WTC11 (cell line): ENCODE measurements at regions of chr6 and their contacts with region 1.

Region 1: DNA sequence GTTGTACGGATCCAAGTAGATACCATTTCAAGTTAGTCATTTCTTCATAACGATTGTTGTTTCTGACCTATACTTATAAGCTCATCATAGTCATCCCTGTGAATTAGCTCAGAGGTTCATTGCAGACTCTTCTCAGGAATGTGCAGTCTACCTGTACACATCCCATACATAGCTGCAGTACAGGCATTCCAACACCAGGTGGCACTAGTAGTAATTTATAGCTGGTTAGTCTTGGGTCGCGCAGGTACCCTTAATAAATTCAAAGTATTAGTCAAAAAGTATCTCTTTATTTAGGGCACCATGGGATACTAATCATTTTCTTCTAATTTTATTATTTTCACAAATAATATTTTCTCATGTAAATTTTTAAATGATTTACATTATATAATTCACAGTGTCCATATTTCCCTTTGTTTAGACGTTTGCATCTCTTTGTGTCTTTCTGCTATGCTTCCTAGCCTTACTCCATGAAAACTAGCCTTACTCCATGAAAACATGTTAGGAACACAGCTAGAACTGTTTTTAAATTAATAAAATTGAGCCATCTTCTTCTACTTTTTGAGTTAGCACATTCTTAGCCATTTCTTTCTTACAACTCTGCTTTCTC is 128.6 kb upstream of the FAM83B start:
- DNase-seq: peak; percentile 79
- ATAC-seq: peak; percentile 81
- H3K4me3 Mint-ChIP-seq: no peak overlapping the region
- H3K27ac Mint-ChIP-seq: no peak overlapping the region
- H3K4me1 Mint-ChIP-seq: peaks cover 9% of the 10 kb centered on the region
- H3K27me3 Mint-ChIP-seq: no peaks in the 10 kb centered on the region
- CTCF ChIP-seq: peak; percentile 88

Region 2: DNA sequence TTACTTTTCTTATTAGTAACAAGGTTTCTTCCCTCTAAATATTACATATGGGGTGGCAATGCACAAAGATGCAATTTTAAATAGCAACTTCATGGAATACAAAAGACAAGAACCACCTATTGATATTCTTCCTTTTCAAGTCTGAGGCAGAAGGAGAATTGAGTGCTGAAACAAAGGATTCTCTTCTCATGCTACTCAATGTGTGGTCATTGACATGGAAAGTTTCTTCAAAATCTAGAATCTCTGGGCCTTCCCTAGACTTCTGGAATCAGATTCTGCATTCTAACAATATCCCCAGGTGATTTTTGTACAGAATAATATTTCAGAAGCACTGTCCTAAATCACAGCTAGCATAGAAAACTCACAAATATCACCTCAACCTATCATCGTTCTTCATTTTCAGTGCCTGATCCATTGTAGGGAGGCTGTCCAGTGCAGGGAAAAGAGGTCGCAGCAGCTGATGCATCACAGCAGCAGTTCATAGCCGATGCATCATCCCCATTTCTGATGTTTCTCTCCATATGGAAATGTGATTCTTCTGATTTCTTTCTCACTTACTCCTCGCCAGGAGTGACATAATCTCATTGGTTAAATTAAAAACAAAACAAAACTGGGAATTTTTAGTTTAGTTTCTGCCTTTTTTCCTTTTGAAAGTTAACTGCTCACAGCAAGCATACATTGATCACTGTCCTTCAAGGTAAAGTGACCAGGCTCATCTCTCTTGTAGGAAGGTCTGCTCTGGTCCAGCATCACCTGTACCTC is 10.9 kb before region 1 on chr6:
- CTCF ChIA-PET with region 1: interaction called, 35 read pairs
- POLR2A ChIA-PET with region 1: no interaction called
- DNase-seq: no peak
- ATAC-seq: peak; percentile 46
- H3K4me3 Mint-ChIP-seq: no peak overlapping the region
- H3K27ac Mint-ChIP-seq: no peak overlapping the region
- H3K4me1 Mint-ChIP-seq: peaks cover 30% of the 10 kb centered on the region
- H3K27me3 Mint-ChIP-seq: no peaks in the 10 kb centered on the region
- CTCF ChIP-seq: no peak

Region 3: GRCh38 chr6:54737247-54737646 is 19.3 kb after region 1 on chr6:
- CTCF ChIA-PET with region 1: interaction called, 19 read pairs
- POLR2A ChIA-PET with region 1: no interaction called
- DNase-seq: peak; percentile 70
- ATAC-seq: peak; percentile 91
- H3K4me3 Mint-ChIP-seq: no peak overlapping the region
- H3K27ac Mint-ChIP-seq: no peak overlapping the region
- H3K4me1 Mint-ChIP-seq: no peaks in the 10 kb centered on the region
- H3K27me3 Mint-ChIP-seq: no peaks in the 10 kb centered on the region
- CTCF ChIP-seq: peak; percentile 66

Region 4: GRCh38 chr6:54846243-54846856 is 128.4 kb after region 1 on chr6 and contains the start of gene FAM83B:
- CTCF ChIA-PET with region 1: no interaction called
- POLR2A ChIA-PET with region 1: no interaction called
- DNase-seq: peak; percentile 82
- ATAC-seq: peak; percentile 87
- H3K4me3 Mint-ChIP-seq: peak within 1 kb of the TSS; percentile 94
- H3K27ac Mint-ChIP-seq: peak within 1 kb of the TSS; percentile 59
- H3K4me1 Mint-ChIP-seq: peaks cover 20% of the 10 kb centered on the region
- H3K27me3 Mint-ChIP-seq: peaks cover 26% of the 10 kb centered on the region
- CTCF ChIP-seq: no peak
- total RNA-seq, gene FAM83B: 3.9 to 4.2 TPM (median 4.0 TPM) in 3 replicates

Region 5: DNA sequence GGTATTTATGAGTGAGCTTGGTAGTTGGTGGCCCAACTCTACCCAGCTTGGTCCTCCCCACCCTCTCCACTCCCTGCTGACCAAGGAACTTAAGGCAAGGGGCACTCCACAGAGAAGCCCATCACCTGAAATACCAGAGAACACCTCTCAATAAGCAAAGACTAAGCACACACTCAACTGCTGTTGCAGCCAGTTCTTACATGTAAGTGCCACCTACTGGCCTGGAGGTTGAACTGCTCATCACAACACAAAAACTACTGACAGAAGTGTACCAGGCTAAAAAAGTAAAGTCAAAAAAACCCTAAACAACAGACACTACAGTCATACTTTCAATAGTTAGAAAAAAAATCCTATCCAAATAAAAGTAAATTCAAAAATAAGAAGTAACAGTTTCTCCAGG is 274.8 kb after region 1 on chr6:
- CTCF ChIA-PET with region 1: interaction called, 27 read pairs
- POLR2A ChIA-PET with region 1: no interaction called
- DNase-seq: peak; percentile 29
- ATAC-seq: peak; percentile 93
- H3K4me3 Mint-ChIP-seq: no peak overlapping the region
- H3K27ac Mint-ChIP-seq: no peak overlapping the region
- H3K4me1 Mint-ChIP-seq: no peaks in the 10 kb centered on the region
- H3K27me3 Mint-ChIP-seq: no peaks in the 10 kb centered on the region
- CTCF ChIP-seq: peak; percentile 50

Region 6: DNA sequence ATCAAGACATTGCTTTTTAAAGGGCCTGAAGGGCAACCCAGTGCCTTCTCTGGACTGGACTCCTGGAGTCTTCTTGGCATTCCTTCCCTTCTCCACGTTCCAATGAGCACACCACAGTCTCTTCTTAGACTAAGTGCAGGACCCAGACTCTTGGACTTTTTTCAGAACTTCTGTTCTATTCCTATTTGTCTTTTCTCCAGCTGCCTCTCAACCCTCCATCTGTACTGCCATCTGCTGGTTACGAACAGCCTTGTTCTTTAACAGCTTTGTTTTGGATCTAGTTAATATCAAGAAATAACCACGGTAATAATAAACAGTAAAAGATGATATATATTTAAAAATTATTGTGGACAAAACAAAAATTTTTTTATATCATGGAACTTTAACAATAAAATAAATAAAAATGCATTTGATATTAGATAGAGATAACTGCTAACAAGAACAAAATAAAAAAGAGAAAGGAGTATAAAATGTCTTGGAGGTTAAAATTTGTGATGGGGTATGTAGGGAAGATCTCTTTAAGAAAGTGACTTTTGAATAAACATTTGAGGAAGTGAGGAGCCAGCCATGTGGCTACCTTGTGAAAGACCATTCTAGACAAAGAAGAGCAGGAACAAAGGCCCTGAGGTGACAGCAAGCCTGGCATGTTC is 351.3 kb after region 1 on chr6:
- CTCF ChIA-PET with region 1: interaction called, 11 read pairs
- POLR2A ChIA-PET with region 1: no interaction called
- DNase-seq: peak; percentile 19
- ATAC-seq: peak; percentile 56
- H3K4me3 Mint-ChIP-seq: no peak overlapping the region
- H3K27ac Mint-ChIP-seq: no peak overlapping the region
- H3K4me1 Mint-ChIP-seq: no peaks in the 10 kb centered on the region
- H3K27me3 Mint-ChIP-seq: no peaks in the 10 kb centered on the region; the same call in 1 of the 2 replicates
- CTCF ChIP-seq: peak; percentile 62